ENCODE measurements at regions of chr1 and their contacts with region 1.

Region 1: GRCh38 chr1:18597160-18598042 is 33.2 kb upstream of the PAX7 start:
- DNase-seq: peak; percentile 88
- ATAC-seq: peak; percentile 91
- H3K4me3 Mint-ChIP-seq: no peak overlapping the region
- H3K27ac Mint-ChIP-seq: no peak overlapping the region
- H3K4me1 Mint-ChIP-seq: peaks cover 12% of the 10 kb centered on the region
- H3K27me3 Mint-ChIP-seq: peaks cover 22% of the 10 kb centered on the region
- CTCF ChIP-seq: peak; percentile 91

Region 2: DNA sequence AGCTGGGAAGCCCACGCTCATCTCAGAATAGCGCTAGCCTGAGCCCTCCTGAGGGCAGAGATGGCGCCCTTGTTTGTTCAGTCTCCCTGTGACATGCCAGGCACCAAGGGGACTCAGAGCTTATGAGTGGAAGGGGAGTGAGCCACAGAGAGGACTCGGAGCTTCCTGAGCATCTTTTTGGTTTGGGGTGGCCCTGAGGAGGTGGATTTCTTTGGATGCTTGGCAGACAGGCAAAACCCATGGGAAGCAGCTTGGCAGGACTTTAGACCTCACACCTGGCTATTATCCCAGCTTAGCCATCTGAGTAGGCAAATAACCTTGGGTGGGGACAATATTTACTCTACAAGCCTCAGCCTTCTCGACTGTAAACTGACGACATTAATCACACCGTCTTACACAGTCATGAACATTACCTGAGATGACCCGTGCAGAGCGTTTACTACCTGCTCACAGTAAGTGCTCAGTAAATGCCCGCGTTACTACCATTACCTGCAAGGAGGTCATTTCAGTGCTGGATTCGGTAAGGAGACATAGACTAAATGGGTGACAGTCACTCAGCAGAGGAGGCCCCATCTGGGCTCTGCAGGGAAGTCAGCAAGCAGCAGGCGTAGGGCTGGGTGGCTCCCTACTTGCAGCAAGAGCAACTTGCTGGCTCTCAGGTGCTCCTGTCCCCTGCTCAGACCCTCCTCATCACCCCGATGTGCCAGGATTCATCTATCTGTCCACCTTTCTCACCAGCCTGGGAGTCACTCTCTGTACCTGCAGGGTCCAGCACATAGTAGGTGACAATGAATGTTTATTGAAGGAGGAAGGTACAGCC is 61.8 kb before region 1 on chr1:
- CTCF ChIA-PET with region 1: no interaction called
- POLR2A ChIA-PET with region 1: no interaction called
- DNase-seq: no peak
- ATAC-seq: no peak
- H3K4me3 Mint-ChIP-seq: no peak overlapping the region
- H3K27ac Mint-ChIP-seq: no peak overlapping the region
- H3K4me1 Mint-ChIP-seq: 0 out of 2 replicates have a peak, but pooled peaks cover 2% of the 10 kb centered on the region
- H3K27me3 Mint-ChIP-seq: peaks cover 72% of the 10 kb centered on the region
- CTCF ChIP-seq: no peak

Region 3: GRCh38 chr1:18581420-18581880 is 16.0 kb before region 1 on chr1:
- CTCF ChIA-PET with region 1: interaction called, 18 read pairs
- POLR2A ChIA-PET with region 1: interaction called, 5 read pairs
- DNase-seq: peak; percentile 81
- ATAC-seq: peak; percentile 83
- H3K4me3 Mint-ChIP-seq: no peak overlapping the region
- H3K27ac Mint-ChIP-seq: no peak overlapping the region
- H3K4me1 Mint-ChIP-seq: no peaks in the 10 kb centered on the region
- H3K27me3 Mint-ChIP-seq: peaks cover 5% of the 10 kb centered on the region
- CTCF ChIP-seq: peak; percentile 89

Region 4: GRCh38 chr1:18668796-18669404 is 71.5 kb after region 1 on chr1:
- CTCF ChIA-PET with region 1: interaction called, 12 read pairs
- POLR2A ChIA-PET with region 1: no interaction called
- DNase-seq: no peak
- ATAC-seq: no peak
- H3K4me3 Mint-ChIP-seq: no peak overlapping the region
- H3K27ac Mint-ChIP-seq: no peak overlapping the region
- H3K4me1 Mint-ChIP-seq: peaks cover 23% of the 10 kb centered on the region
- H3K27me3 Mint-ChIP-seq: peaks cover 41% of the 10 kb centered on the region
- CTCF ChIP-seq: no peak

Region 5: GRCh38 chr1:18693256-18694098 is 96.1 kb after region 1 on chr1:
- CTCF ChIA-PET with region 1: interaction called, 42 read pairs
- POLR2A ChIA-PET with region 1: no interaction called
- DNase-seq: peak; percentile 89
- ATAC-seq: peak; percentile 95
- H3K4me3 Mint-ChIP-seq: peak overlapping the region; percentile 69
- H3K27ac Mint-ChIP-seq: 0 out of 2 replicates have a peak overlapping the region, but pooled peaks have one; percentile 41
- H3K4me1 Mint-ChIP-seq: peaks cover 16% of the 10 kb centered on the region
- H3K27me3 Mint-ChIP-seq: peaks cover 33% of the 10 kb centered on the region
- CTCF ChIP-seq: no peak

Region 6: GRCh38 chr1:18794561-18794960 is 197.2 kb after region 1 on chr1:
- CTCF ChIA-PET with region 1: interaction called, 12 read pairs
- POLR2A ChIA-PET with region 1: no interaction called
- DNase-seq: peak; percentile 72
- ATAC-seq: peak; percentile 94
- H3K4me3 Mint-ChIP-seq: no peak overlapping the region
- H3K27ac Mint-ChIP-seq: peak overlapping the region; percentile 6; the same call in 1 of the 2 replicates
- H3K4me1 Mint-ChIP-seq: peaks cover 20% of the 10 kb centered on the region
- H3K27me3 Mint-ChIP-seq: peaks cover 4% of the 10 kb centered on the region
- CTCF ChIP-seq: no peak

Region 7: DNA sequence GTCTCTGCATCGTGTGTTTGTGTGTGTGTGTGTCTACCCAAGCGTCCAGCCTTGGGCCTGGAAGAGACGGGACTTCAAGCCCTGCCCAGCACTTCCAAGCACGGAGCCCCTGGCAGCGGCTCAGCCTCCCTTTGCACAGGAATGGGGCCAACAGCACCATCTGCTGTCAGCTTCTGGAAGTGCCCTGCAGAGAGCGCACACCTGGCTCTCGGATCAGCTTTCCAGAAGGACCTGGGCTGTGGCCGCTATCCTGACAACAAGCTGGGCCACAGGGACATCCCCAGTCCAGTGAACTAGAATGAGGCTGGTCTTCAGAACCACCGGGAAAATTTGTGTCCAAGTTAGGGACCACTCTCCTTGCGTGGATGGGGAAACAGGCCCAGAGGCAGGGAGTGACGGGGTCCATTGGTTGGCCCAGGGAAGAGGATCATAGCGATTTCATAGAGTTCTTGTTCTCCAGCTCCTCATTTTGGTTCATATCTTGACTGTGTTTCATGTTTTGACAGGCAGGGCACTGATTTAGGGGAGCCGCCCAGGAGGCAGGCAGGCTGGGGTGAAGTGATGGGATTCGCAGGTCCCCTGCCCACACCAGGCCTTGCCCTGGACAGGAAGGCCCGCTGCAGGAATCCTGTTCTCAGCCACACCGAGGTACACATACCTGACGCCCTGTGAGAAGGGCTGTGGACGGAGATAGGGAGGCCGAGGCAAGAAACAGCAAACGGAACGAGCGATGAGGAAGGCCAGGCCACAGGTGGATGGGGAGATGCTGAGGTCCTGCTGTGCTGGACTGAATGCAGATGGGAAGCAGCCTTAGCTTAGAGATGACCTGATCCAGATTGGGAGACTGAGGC is 223.6 kb after region 1 on chr1:
- CTCF ChIA-PET with region 1: interaction called, 120 read pairs
- POLR2A ChIA-PET with region 1: no interaction called
- DNase-seq: peak; percentile 91
- ATAC-seq: peak; percentile 94
- H3K4me3 Mint-ChIP-seq: no peak overlapping the region
- H3K27ac Mint-ChIP-seq: no peak overlapping the region
- H3K4me1 Mint-ChIP-seq: peaks cover 16% of the 10 kb centered on the region
- H3K27me3 Mint-ChIP-seq: peaks cover 14% of the 10 kb centered on the region
- CTCF ChIP-seq: peak; percentile 89

Region 8: DNA sequence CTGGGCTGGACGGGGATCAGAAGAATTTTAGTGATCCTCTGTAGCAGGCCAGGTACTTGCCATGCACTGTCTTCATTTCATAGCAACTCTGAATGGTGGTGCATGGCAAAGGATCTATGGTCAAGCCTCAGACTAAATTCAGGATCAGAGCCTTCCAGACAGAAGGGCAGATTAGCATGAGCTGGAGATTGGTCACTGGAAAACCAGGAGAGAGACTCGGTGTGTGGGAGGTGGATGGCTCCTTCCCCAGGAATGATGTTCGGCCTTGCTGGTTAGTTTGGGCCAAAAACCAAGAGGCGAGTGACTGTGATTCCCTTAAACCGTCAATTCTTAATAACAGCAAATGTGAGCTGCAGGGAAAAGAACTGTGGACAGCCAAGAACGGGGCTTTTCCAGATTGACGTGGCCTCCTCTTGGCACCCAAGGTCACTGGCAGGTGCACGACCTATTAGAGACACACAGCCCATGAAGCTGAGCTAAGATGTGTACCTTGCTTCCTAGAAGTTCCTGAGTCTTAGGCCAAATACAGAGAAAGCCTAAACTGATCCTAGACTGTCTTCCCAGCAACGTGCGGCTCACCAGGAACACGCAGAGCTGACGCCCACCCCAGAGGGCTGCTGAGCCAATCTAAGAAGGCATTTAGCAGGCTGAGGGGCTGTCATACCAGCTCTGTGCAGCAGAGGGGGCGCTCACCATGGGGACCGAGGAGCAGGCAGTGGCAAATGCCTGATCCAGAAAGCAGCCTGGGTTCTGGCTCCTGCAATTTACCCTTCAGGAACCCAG is 286.4 kb after region 1 on chr1:
- CTCF ChIA-PET with region 1: interaction called, 11 read pairs
- POLR2A ChIA-PET with region 1: no interaction called
- DNase-seq: peak; percentile 90
- ATAC-seq: peak; percentile 92
- H3K4me3 Mint-ChIP-seq: no peak overlapping the region
- H3K27ac Mint-ChIP-seq: no peak overlapping the region
- H3K4me1 Mint-ChIP-seq: no peaks in the 10 kb centered on the region; the same call in 1 of the 2 replicates
- H3K27me3 Mint-ChIP-seq: no peaks in the 10 kb centered on the region
- CTCF ChIP-seq: peak; percentile 85